GM18951 (cell line): ENCODE measurements at regions of chr19 and their contacts with region 1.

Region 1: DNA sequence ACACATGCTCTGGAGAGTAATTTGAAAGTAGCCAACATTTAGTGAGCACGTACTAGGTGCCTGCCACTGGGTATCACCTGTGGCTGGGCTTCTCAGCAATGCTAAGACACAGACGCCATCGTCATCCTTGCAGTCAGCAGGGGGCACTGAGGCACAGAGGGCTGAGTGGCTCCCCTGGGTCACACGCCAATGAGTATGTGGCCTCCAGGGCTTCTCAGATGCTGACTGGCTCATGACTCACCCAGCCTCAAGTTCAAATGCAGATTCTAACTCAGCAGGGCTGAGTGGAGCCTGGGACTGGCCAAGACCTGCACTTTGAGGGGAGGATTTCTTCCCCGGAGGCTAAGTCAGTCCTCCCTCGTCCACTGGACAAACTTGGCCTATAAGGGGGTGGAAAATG is 115.1 kb upstream of the CACNA1A start:
- POLR2A ChIP-seq: no peak

Region 2: GRCh38 chr19:13430790-13431582 is 190.4 kb before region 1 on chr19:
- in situ Hi-C with region 1: no loop called
- POLR2A ChIP-seq: no peak

Region 3: DNA sequence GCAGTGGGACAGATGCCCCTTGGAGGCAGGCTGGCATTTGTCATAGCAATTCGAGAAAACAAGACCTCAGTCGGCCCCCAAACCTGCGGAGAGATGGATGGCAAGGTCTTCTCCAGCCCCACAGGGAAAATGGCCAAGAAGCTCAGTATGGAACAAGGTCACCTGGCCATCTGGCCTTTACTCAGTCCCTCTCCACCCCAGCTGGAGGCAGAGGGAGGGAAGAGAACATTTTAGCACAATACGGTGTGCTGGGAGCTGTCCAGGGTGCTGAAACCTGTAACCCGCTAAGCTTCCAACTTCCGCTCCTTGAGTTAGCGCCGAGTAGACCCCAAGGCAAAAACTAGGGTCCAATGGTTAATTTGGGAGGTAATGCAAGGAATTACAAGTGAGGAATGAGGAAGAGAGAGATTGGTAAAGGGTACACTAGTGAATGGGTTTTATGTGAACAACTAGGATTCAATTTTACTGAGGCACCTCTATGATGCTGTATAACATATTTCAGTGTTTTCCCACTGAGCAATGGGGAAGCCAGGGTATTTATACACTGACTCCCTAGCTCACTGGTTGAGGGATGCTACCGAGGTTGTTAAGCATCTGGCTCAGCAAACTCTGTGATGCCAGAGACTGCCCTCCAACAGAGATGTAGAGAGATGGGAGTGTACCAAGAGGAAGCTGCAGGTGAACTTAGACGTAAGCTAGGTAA is 179.5 kb before region 1 on chr19:
- in situ Hi-C with region 1: no loop called
- POLR2A ChIP-seq: no peak

Region 4: GRCh38 chr19:13505761-13506470 is 115.5 kb before region 1 on chr19:
- in situ Hi-C with region 1: no loop called
- POLR2A ChIP-seq: no peak

Region 5: DNA sequence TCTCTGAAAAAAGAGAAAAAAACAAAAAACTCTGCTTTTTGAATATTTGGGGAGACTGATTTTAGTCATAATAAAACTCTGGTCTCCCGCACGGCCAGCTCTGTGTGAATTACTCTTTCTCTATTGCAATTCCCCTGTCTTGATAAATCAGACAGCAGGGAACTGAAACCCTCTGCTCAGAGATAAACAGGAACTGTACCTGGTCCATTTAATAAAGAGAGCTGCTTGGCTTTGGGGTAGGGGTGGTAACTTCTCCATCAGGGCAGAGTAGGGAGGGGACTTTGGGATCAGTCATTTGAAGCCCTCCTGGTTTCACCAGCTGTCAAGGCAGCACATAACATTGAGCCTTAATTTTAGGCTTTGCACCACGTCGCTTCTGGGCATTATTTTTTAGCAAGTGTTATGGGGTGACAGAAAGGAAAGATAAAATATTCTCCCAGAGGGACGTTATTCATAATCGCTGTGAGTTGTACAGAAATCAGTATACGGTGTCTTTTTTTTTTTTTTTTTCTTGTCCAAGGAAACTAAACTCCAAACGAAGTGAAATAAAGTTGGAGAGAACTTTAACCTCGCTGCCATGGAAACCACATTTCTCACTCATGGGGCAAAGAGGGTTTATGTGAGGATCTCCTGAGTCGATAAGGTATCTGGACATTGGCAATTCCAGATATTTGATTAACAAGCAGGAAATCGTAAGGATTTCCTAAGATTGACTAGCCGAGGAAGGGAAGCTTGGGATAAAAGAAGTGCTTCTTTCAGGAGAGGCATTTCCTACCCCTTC is 43.9 kb after region 1 on chr19:
- in situ Hi-C with region 1: no loop called
- POLR2A ChIP-seq: no peak

Region 6: DNA sequence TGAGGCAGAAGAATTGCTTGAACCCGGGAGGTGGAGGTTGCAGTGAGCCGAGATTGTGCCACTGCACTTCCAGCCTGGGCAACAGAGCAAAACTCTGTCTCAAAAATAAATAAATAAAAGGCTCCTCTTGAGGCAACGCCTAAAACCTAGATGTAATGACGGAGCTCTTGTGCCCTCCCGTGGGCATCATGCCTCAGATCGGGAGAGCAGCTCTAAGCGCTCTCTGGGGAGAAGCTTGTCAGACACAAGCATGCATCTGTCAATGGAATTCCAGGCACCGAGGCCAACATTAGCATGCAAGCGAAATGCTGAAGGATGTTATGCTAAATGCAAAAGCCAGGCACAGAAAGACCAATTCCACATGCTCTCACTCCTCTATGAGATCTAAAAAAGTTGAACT is 97.3 kb after region 1 on chr19:
- in situ Hi-C with region 1: loop called (anchors 10 kb)
- POLR2A ChIP-seq: no peak